ENCODE measurements at regions of chr11 and their contacts with region 1.

Region 1: GRCh38 chr11:61477727-61478148 is 30.8 kb upstream of the LRRC10B start:
- DNase-seq: peak; percentile 47 to 84 (median 83)
- ATAC-seq: peak; percentile 7 to 39
- H3K4me3 ChIP-seq: no peak overlapping the region
- H3K27ac ChIP-seq: no peak overlapping the region
- H3K4me1 ChIP-seq: no peaks in the 10 kb centered on the region
- H3K27me3 ChIP-seq: no peaks in the 10 kb centered on the region

Region 2: DNA sequence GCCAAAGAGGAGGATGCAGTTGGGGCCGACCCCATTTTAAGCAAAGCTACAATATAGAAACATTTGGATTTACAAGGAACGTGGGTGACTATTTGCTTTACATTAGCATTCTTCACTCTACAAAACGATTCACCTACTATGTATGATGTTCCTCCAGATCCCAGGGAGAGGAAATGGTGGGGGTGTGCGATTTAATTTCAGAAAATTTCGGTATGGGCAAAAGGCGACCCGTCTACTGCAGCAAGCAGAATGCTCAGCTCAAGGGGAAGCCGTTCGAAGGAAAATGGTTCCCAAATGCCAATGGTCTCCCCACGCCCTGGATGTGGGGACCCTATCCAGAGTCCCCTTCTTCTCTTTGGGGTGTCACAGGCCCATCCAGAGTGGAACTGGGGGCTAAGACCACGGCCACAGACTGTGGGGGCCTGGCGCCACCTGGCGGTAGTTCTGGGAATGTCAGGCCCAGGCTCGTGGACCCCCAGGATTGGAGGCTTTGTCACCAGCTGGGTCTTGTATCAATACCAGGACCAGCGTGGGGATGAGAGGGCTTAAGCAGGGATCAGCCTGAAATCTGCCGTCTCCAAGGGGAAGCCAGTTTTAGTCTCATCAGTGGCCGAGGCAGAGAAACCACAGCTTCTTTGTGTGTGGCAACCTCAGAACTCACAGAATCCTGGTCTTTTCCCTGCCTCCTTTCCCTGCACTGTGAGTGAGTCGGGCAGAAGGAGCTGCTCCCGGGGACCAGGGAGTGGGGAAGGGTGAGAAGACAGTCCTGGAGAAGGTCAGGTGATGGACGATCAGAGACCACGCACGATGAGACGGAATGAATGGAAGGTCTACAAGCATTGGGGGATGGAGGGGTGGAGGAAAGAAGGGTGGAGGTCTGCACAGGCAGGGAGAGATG is 39.2 kb after region 1 on chr11:
- intact Hi-C with region 1: loop called in 3 of 4 experiments (anchors 2 to 5 kb)
- DNase-seq: peak in 1 of 3 donors; percentile 80
- ATAC-seq: peak; percentile 21 to 58
- H3K4me3 ChIP-seq: no peak overlapping the region
- H3K27ac ChIP-seq: no peak overlapping the region
- H3K4me1 ChIP-seq: no peaks in the 10 kb centered on the region
- H3K27me3 ChIP-seq: no peaks in the 10 kb centered on the region

Region 3: GRCh38 chr11:61627567-61628445 is 150.1 kb after region 1 on chr11:
- intact Hi-C with region 1: loop called in 2 of 4 experiments (anchors 10 kb)
- DNase-seq: peak; percentile 67 to 86 (median 80)
- ATAC-seq: peak; percentile 70 to 83
- H3K4me3 ChIP-seq: no peak overlapping the region
- H3K27ac ChIP-seq: peak overlapping the region; percentile 96
- H3K4me1 ChIP-seq: no peaks in the 10 kb centered on the region
- H3K27me3 ChIP-seq: no peaks in the 10 kb centered on the region

Region 4: DNA sequence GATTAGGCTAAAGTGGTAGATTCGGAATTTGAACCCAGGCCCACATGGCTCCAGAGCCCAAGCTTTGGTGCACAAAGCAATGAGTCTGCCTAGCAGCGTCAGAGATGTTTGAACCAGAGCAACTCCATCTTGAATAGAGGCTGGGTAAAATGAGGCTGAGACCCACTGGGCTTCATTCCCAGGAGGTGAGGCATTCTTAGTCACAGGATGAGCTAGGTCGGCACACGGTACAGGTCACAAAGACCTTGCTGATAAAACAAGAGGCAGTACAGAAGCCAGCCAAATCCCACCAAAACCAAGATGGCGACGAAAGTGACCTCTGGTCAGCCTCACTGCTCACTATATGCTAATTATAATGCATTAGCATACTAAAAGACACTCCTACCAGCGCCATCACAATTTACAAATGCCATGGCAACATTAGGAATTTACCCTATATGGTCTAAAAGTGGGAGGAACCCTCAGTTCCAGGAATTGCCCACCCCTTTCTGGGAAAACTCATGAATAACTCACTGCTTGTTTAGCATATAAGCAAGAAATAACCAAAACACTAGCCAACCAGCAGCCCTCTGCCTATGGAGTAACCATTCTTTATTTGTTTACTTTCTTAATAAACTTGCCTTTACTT is 162.2 kb after region 1 on chr11:
- intact Hi-C with region 1: loop called in 3 of 4 experiments (anchors 5 to 10 kb)
- DNase-seq: no peak
- ATAC-seq: no peak
- H3K4me3 ChIP-seq: no peak overlapping the region
- H3K27ac ChIP-seq: no peak overlapping the region
- H3K4me1 ChIP-seq: no peaks in the 10 kb centered on the region
- H3K27me3 ChIP-seq: no peaks in the 10 kb centered on the region